Activated CD4-positive, alpha-beta T cell treated with anti-CD3 and anti-CD28 coated beads for 36 hours (primary cell): ENCODE measurements at regions of chr7 and their contacts with region 1.

Region 1: DNA sequence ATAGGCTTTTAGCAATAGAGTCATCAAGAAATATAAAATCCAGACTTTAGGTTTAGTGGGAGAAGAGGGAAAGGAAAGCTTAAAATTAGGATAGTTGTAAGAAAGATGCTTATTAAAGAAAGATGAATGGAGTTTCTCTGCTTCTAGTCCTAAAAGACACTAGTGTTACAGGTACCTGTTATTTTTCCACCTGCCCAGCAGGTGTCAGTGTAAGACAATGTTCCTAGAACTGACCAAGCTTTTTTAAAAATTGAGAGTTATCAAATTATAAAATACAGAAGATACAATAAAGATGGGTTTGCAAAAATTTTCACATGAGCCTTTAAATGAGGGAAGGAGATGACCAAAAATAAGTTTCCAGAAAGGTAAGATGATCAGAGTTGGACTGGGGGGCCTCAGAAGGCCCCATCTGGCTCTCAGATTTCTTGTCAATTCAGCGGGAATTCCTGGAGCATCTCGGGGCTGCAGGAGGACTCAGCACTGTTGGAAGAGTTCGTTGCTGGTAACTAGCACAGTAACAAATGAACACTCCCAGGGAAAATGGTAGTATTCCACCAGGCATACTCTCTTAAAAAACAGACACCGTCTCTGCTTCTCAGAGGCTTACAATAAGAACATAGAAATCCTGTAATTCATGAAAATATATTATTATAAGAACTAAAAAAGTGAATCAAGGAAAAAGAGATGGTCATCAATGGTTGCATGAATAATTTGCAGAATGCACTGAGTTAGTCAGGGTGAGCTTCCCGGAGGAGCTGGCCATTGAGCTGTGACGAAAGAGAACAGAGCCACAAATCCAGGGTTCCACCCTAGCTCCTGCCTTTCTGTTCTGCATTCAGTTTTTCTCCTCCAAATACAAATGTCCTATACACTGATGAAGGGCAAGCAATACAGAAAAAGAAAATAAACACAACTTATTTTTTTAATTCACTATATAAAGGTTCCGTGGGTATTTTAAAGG is 71.8 kb upstream of the PIK3CG start:
- DNase-seq: peak; percentile 55
- ATAC-seq: peak; percentile 44
- H3K4me3 Mint-ChIP-seq: no peak overlapping the region
- H3K27ac Mint-ChIP-seq: no peak overlapping the region
- H3K4me1 Mint-ChIP-seq: no peaks in the 10 kb centered on the region
- H3K27me3 Mint-ChIP-seq: no peaks in the 10 kb centered on the region

Region 2: GRCh38 chr7:106779877-106780276 is 13.4 kb before region 1 on chr7:
- CTCF ChIA-PET with region 1: interaction called, 19 read pairs
- POLR2A ChIA-PET with region 1: no interaction called
- intact Hi-C with region 1: no loop called
- DNase-seq: peak; percentile 34
- ATAC-seq: peak; percentile 30
- H3K4me3 Mint-ChIP-seq: no peak overlapping the region
- H3K27ac Mint-ChIP-seq: no peak overlapping the region
- H3K4me1 Mint-ChIP-seq: peaks cover 17% of the 10 kb centered on the region
- H3K27me3 Mint-ChIP-seq: no peaks in the 10 kb centered on the region

Region 3: GRCh38 chr7:106827626-106828025 is 34.3 kb after region 1 on chr7:
- CTCF ChIA-PET with region 1: no interaction called
- POLR2A ChIA-PET with region 1: no interaction called
- intact Hi-C with region 1: no loop called
- DNase-seq: no peak
- ATAC-seq: no peak
- H3K4me3 Mint-ChIP-seq: no peak overlapping the region
- H3K27ac Mint-ChIP-seq: no peak overlapping the region
- H3K4me1 Mint-ChIP-seq: no peaks in the 10 kb centered on the region
- H3K27me3 Mint-ChIP-seq: no peaks in the 10 kb centered on the region

Region 4: DNA sequence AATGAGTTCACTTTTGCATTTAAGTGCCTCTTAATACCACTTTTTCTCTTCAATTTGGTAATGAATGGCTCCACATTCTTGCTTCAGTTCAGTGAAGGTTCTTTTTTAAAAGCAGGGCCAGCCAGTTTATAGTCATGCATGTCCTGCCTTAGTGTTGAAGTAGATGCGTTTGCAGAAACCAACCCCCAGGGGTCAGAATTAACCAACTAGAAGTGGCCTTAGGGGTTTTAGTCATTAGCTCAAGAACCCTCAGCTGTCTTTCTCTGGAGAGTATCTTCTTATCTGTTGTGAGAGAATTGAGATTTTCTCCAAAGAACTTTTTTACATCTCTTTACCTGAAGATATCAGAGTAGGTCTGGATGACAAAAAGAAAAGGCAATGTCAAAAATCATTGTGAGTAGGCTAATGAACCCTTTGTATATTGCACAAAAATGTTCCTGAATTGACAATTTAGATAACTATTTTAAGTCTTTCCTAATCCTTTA is 154.0 kb after region 1 on chr7:
- CTCF ChIA-PET with region 1: interaction called, 6 read pairs
- POLR2A ChIA-PET with region 1: no interaction called
- intact Hi-C with region 1: loop called (anchors 2 to 5 kb)
- DNase-seq: peak; percentile 49
- ATAC-seq: peak; percentile 51
- H3K4me3 Mint-ChIP-seq: no peak overlapping the region
- H3K27ac Mint-ChIP-seq: no peak overlapping the region
- H3K4me1 Mint-ChIP-seq: no peaks in the 10 kb centered on the region
- H3K27me3 Mint-ChIP-seq: no peaks in the 10 kb centered on the region

Region 5: DNA sequence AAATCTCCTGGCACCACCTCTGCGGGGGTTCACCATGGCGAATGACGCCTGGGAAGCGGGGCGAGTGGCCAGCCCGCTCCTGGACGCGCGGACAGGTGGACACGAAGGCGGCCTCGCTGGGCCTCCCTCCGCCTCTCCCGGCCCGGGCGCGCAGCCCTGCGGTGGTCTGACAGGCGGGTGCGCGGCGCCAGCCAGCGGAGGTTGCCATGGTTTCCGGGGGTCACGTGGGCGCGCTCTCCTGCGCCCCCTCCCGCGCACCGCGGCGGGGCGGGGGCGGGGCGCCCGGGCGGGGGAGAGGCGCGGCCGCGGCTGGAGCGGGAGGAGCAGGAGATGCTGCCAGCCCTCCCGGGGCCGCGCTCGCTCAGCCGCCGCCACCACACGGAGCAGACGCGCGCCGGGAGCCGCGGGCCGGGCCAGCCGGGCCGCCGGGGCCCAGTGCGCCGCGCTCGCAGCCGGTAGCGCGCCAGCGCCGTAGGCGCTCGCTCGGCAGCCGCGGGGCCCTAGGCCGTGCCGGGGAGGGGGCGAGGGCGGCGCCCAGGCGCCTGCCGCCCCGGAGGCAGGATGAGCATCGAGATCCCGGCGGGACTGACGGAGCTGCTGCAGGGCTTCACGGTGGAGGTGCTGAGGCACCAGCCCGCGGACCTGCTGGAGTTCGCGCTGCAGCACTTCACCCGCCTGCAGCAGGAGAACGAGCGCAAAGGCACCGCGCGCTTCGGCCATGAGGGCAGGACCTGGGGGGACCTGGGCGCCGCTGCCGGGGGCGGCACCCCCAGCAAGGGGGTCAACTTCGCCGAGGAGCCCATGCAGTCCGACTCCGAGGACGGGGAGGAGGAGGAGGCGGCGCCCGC is 251.3 kb after region 1 on chr7 and contains the start of gene PRKAR2B:
- CTCF ChIA-PET with region 1: interaction called, 6 read pairs
- POLR2A ChIA-PET with region 1: no interaction called
- intact Hi-C with region 1: loop called in 1 of 2 experiments (anchors 1 kb)
- DNase-seq: peak; percentile 80
- ATAC-seq: peak; percentile 86
- H3K4me3 Mint-ChIP-seq: peak within 1 kb of the TSS; percentile 69
- H3K27ac Mint-ChIP-seq: no peak within 1 kb of the TSS
- H3K4me1 Mint-ChIP-seq: peaks cover 15% of the 10 kb centered on the region
- H3K27me3 Mint-ChIP-seq: peaks cover 34% of the 10 kb centered on the region
- total RNA-seq, gene PRKAR2B: 0.93 to 1.4 TPM

Region 6: DNA sequence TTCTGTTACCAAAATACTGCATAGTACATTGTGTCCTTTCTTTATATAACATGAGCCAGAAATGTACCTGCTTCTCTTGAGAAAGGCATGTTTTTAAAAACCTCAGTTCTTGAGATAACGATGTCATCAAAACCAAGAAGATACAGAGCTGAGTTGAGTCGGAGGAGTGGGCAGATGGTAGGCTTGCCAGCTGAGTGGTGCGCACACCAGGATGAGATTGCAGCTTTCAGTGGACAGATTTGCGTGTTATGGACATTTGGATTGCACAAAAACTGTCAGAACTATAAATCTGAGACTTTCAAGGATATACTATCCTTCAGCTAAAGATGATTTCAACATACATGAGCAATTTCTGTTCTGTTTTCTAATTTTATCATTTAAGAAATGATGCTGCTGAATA is 276.2 kb after region 1 on chr7:
- CTCF ChIA-PET with region 1: no interaction called
- POLR2A ChIA-PET with region 1: no interaction called
- intact Hi-C with region 1: loop called in 1 of 2 experiments (anchors 10 kb)
- DNase-seq: no peak
- ATAC-seq: no peak
- H3K4me3 Mint-ChIP-seq: no peak overlapping the region
- H3K27ac Mint-ChIP-seq: no peak overlapping the region
- H3K4me1 Mint-ChIP-seq: no peaks in the 10 kb centered on the region
- H3K27me3 Mint-ChIP-seq: no peaks in the 10 kb centered on the region